ENCODE measurements at regions of chr13 and their contacts with region 1.

Region 1: DNA sequence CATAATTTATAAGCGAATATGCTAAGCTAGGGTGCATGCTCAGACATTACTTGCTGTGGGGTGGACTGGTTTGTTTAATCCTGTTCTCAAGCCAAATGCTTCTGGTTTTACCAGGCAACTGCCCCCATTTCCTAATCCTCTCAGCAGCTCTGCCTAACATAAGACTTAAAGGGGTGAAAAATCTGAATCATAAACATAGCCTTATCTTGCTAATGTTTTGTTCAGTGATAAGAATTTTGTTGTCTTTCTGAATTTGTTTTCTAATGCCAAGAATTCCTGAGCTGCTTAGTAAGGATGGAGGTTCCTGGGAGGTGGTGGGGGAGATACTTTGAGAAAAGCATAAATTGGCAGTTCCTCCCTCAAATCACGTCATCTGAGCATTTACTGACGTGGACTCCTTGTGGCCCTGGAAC is 42.7 kb downstream of the ING1 start:
- DNase-seq: no peak
- H3K4me3 ChIP-seq: no peak overlapping the region
- H3K27ac ChIP-seq: no peak overlapping the region
- H3K4me1 ChIP-seq: no peaks in the 10 kb centered on the region
- H3K27me3 ChIP-seq: no peaks in the 10 kb centered on the region
- CTCF ChIP-seq: no peak
- POLR2A ChIP-seq: no peak

Region 2: DNA sequence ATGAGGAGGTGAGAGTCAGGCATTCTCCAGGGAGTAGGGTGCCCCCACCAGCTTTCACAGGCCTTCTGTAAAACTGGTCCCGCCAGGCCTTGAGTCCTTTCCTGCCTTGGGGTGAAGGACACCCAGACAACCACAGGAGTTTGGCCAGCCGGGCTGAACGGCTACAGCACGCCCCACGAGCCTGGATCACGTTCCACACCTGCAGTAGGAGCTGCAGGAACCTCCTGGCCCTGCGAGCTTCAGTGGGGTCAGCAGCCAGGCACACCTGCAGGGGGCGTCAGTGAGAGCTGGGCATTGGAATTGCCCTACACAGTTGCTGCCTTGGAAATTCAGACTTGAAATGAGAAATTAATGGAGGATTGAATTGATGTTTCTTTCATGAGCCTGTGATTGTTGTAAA is 403.5 kb before region 1 on chr13:
- intact Hi-C with region 1: no loop called
- DNase-seq: no peak
- H3K4me3 ChIP-seq: no peak overlapping the region
- H3K27ac ChIP-seq: no peak overlapping the region
- H3K4me1 ChIP-seq: no peaks in the 10 kb centered on the region
- H3K27me3 ChIP-seq: no peaks in the 10 kb centered on the region
- CTCF ChIP-seq: no peak
- POLR2A ChIP-seq: no peak

Region 3: DNA sequence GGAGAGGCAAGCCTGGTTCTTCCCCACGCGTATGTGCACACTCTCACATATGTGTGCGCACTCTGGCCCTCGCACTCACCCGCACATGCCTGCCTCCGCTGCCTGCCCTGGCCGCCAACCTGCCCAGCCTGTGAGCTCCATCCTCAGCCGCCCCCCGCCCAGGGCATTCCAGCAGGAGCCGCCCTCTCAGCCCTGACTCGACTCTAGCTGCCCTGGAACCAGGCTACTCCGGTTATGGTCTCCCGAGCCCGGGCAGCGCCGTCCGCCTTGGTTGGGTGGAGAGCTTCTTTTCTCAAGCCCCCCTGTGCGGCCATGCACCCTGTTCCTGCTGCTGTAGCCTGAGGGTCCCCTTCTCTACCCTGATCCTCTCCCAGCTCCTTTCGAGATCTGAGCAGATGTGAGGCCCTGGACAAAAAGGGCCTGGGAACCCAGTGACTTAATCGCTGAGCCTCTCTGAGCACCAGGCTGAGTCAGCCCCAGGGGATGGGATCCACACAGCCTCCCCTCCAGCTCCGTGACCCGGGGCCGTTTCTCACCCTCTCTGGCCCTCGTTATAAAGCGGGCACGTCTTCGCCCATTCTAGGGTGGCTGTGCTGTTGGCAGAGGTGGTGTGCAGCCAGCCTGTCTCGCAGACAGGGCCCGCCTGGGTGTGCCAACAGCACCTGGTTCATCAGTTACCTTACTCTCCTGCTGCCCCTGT is 755.7 kb after region 1 on chr13:
- intact Hi-C with region 1: loop called (anchors 5 kb)
- DNase-seq: no peak
- H3K4me3 ChIP-seq: no peak overlapping the region
- H3K27ac ChIP-seq: no peak overlapping the region
- H3K4me1 ChIP-seq: no peaks in the 10 kb centered on the region
- H3K27me3 ChIP-seq: peaks cover 0 to 66% of the 10 kb centered on the region in 2 donors
- CTCF ChIP-seq: no peak
- POLR2A ChIP-seq: no peak

Measured in breast epithelium (tissue), 4 donors.